Sciatic nerve (tissue), 2 donors: ENCODE measurements at regions of chr13 and their contacts with region 1.

Region 1: GRCh38 chr13:82729401-82729800 is 1152.9 kb downstream of the SLITRK1 start:
- DNase-seq: no peak
- ATAC-seq: no peak

Region 2: DNA sequence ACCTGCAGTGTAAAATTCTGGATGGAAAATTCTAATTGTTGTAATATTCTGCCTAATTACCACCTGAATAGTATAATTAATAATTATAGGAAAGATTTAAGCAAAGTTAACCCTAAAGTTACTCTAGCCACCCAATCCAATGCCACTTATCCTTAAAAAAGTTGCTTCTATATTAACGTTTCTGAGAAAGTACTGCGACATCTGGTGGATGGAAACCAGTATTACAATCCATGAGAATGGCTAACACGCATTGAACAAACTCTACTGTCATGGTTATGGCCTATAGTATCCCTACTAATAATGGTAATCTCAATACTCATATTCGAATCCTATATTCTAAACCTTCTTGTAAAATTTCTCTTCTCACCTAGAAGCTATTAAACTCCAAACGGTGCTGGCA is 398.9 kb before region 1 on chr13:
- intact Hi-C with region 1: loop called (anchors 5 kb)
- DNase-seq: no peak
- ATAC-seq: no peak

Region 3: DNA sequence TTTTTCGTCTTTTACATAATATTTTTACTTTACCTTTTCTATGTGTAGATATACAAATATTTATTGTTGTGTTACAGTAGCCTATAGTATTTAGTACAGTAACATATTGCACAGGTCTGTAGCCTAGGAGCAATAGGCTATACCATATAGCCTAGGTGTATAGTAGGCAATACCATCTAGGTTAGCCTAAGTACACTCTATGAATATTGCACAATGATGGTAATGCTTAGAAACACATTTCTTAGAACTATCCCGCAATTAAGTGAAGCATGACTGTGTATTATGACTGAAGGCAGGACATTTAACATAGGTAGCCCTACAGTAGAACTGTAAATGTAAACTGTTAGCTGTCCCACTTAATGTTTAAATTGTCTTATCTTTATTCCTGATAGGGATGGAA is 188.6 kb after region 1 on chr13:
- intact Hi-C with region 1: no loop called
- DNase-seq: no peak
- ATAC-seq: no peak